Head of caudate nucleus (tissue), 42 donors: ENCODE measurements at regions of chr5 and their contacts with region 1.

Region 1: GRCh38 chr5:139197710-139198669 is at the start of gene SIL1:
- DNase-seq: peak; percentile 88 to 99 (median 97)

Region 2: GRCh38 chr5:138945421-138946240 is 252.4 kb before region 1 on chr5:
- intact Hi-C with region 1: loop called (anchors 10 kb)
- DNase-seq: peak in 3 of 42 donors; percentile 27 to 78 (median 46)